Natural killer cell (primary cell): ENCODE measurements at regions of chr10 and their contacts with region 1.

Region 1: DNA sequence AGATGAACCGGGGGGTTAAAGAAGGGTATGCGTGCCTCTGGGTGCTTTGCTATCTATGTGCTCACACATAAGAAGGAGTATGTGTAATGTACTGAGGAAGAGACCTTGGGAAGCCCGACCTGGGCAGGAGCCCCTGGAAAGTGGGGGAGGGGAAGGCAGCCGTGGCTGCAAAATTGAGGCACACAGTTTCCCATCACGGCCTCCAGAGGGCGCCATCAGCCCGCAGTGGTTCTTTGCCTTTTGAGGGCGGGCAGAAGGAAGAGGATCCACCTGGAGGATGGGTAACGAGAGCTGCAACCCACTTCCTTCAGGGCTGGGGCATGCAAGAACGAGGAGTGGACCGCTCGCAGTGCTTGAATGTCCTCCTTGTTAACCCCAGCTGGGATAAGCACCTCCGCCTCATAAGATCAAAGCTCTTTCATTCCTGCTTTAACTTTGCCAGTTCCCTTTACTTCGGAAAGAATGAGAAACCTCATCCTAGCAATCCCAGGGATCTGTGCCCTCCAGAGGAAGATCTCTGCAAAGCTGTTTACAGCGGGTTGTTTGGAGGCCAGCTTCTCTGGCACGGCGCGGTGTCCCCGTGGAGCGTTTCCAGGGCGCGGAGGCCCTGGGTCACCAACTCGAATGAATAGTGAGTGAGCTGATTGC is 77.9 kb downstream of the PCGF5 start:
- DNase-seq: peak; percentile 62 to 90
- ATAC-seq: peak; percentile 89 to 96 (median 95)
- H3K4me3 ChIP-seq: peak overlapping the region; percentile 6
- H3K4me3 Mint-ChIP-seq: peak overlapping the region; percentile 81
- H3K27ac ChIP-seq: no peak overlapping the region
- H3K27ac Mint-ChIP-seq: no peak overlapping the region
- H3K4me1 ChIP-seq: peaks cover 8% of the 10 kb centered on the region
- H3K4me1 Mint-ChIP-seq: peaks cover 11% of the 10 kb centered on the region in 2 donors
- H3K27me3 ChIP-seq: no peaks in the 10 kb centered on the region
- H3K27me3 Mint-ChIP-seq: peaks cover 10% of the 10 kb centered on the region in 2 donors
- CTCF ChIP-seq: peak; percentile 81

Region 2: GRCh38 chr10:91043173-91043910 is 255.0 kb before region 1 on chr10:
- intact Hi-C with region 1: no loop called
- DNase-seq: peak in 1 of 2 donors; percentile 12
- ATAC-seq: no peak
- H3K4me3 ChIP-seq: no peak overlapping the region
- H3K4me3 Mint-ChIP-seq: no peak overlapping the region
- H3K27ac ChIP-seq: no peak overlapping the region
- H3K27ac Mint-ChIP-seq: no peak overlapping the region
- H3K4me1 ChIP-seq: no peaks in the 10 kb centered on the region
- H3K4me1 Mint-ChIP-seq: no peaks in the 10 kb centered on the region
- H3K27me3 ChIP-seq: no peaks in the 10 kb centered on the region
- H3K27me3 Mint-ChIP-seq: peaks cover 18 to 30% of the 10 kb centered on the region in 2 donors
- CTCF ChIP-seq: no peak

Region 3: DNA sequence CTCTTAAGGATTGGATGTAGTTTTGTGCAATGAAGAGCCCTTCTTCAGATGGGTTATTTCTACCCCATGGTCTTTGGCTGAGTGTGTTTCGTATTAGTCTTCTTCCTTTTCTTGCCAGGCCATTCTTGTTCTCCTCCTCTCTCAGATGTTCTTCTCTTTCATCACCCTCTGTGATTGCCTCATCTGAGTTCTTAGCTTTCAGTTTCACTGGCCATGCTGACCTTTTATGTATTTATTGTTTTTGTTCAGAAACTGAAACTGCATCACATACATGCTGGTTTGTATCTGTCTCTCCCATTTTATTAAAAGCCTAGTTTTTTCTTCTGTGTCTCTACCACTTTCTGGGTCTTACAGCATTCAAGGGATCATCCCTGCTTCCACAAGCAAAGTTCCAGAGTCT is 99.6 kb before region 1 on chr10:
- intact Hi-C with region 1: no loop called
- DNase-seq: peak in 1 of 2 donors; percentile 62
- ATAC-seq: peak; percentile 65 to 81 (median 79)
- H3K4me3 ChIP-seq: no peak overlapping the region
- H3K4me3 Mint-ChIP-seq: peak overlapping the region; percentile 43
- H3K27ac ChIP-seq: peak overlapping the region; percentile 86
- H3K27ac Mint-ChIP-seq: peak overlapping the region; percentile 86
- H3K4me1 ChIP-seq: peaks cover 34% of the 10 kb centered on the region
- H3K4me1 Mint-ChIP-seq: peaks cover 62 to 67% of the 10 kb centered on the region in 2 donors
- H3K27me3 ChIP-seq: no peaks in the 10 kb centered on the region
- H3K27me3 Mint-ChIP-seq: no peaks in the 10 kb centered on the region
- CTCF ChIP-seq: no peak

Region 4: GRCh38 chr10:91367127-91367531 is 68.8 kb after region 1 on chr10:
- intact Hi-C with region 1: no loop called
- DNase-seq: no peak
- ATAC-seq: no peak
- H3K4me3 ChIP-seq: no peak overlapping the region
- H3K4me3 Mint-ChIP-seq: no peak overlapping the region
- H3K27ac ChIP-seq: no peak overlapping the region
- H3K27ac Mint-ChIP-seq: no peak overlapping the region
- H3K4me1 ChIP-seq: no peaks in the 10 kb centered on the region
- H3K4me1 Mint-ChIP-seq: no peaks in the 10 kb centered on the region
- H3K27me3 ChIP-seq: peaks cover 2% of the 10 kb centered on the region
- H3K27me3 Mint-ChIP-seq: peaks cover 21 to 24% of the 10 kb centered on the region in 2 donors
- CTCF ChIP-seq: no peak

Region 5: GRCh38 chr10:91635401-91636400 is 337.4 kb after region 1 on chr10:
- intact Hi-C with region 1: loop called (anchors 2 kb)
- DNase-seq: peak in 1 of 2 donors; percentile 72
- ATAC-seq: peak in 1 of 3 donors; percentile 34
- H3K4me3 ChIP-seq: no peak overlapping the region
- H3K4me3 Mint-ChIP-seq: no peak overlapping the region
- H3K27ac ChIP-seq: no peak overlapping the region
- H3K27ac Mint-ChIP-seq: no peak overlapping the region
- H3K4me1 ChIP-seq: no peaks in the 10 kb centered on the region
- H3K4me1 Mint-ChIP-seq: peaks cover 0 to 6% of the 10 kb centered on the region in 2 donors
- H3K27me3 ChIP-seq: peaks cover 25% of the 10 kb centered on the region
- H3K27me3 Mint-ChIP-seq: peaks cover 37 to 55% of the 10 kb centered on the region in 2 donors
- CTCF ChIP-seq: peak; percentile 18

Region 6: GRCh38 chr10:91694170-91694794 is 395.9 kb after region 1 on chr10:
- intact Hi-C with region 1: loop called (anchors 5 kb)
- DNase-seq: peak in 1 of 2 donors; percentile 51
- ATAC-seq: no peak
- H3K4me3 ChIP-seq: no peak overlapping the region
- H3K4me3 Mint-ChIP-seq: no peak overlapping the region
- H3K27ac ChIP-seq: no peak overlapping the region
- H3K27ac Mint-ChIP-seq: no peak overlapping the region
- H3K4me1 ChIP-seq: no peaks in the 10 kb centered on the region
- H3K4me1 Mint-ChIP-seq: no peaks in the 10 kb centered on the region
- H3K27me3 ChIP-seq: no peaks in the 10 kb centered on the region
- H3K27me3 Mint-ChIP-seq: peaks cover 5 to 8% of the 10 kb centered on the region in 2 donors
- CTCF ChIP-seq: peak; percentile 49